ENCODE measurements at regions of chr22 and their contacts with region 1.

Region 1: GRCh38 chr22:21652010-21652546 is 10.0 kb downstream of the SDF2L1 start:
- DNase-seq: peak; percentile 86
- ATAC-seq: peak; percentile 98
- H3K4me3 ChIP-seq: peak overlapping the region; percentile 48 to 67 (median 58)
- H3K4me3 Mint-ChIP-seq: peak overlapping the region; percentile 91
- H3K27ac ChIP-seq: no peak overlapping the region
- H3K27ac Mint-ChIP-seq: peak overlapping the region; percentile 63
- H3K4me1 ChIP-seq: peaks cover 14 to 27% of the 10 kb centered on the region in 2 donors
- H3K4me1 Mint-ChIP-seq: peaks cover 26% of the 10 kb centered on the region
- H3K27me3 ChIP-seq: no peaks in the 10 kb centered on the region
- H3K27me3 Mint-ChIP-seq: no peaks in the 10 kb centered on the region
- CTCF ChIP-seq: no peak

Region 2: GRCh38 chr22:21666786-21667185 is 14.7 kb after region 1 on chr22:
- CTCF ChIA-PET with region 1: interaction called, 6 read pairs
- POLR2A ChIA-PET with region 1: no interaction called
- intact Hi-C with region 1: loop called (anchors 1 kb)
- DNase-seq: no peak
- ATAC-seq: no peak
- H3K4me3 ChIP-seq: peak overlapping the region in 4 of 5 experiments; percentile 77 to 96 (median 90)
- H3K4me3 Mint-ChIP-seq: peak overlapping the region; percentile 96
- H3K27ac ChIP-seq: peak overlapping the region in 1 of 2 donors; percentile 92
- H3K27ac Mint-ChIP-seq: peak overlapping the region; percentile 69
- H3K4me1 ChIP-seq: peaks cover 8 to 17% of the 10 kb centered on the region in 2 donors
- H3K4me1 Mint-ChIP-seq: peaks cover 28% of the 10 kb centered on the region
- H3K27me3 ChIP-seq: no peaks in the 10 kb centered on the region
- H3K27me3 Mint-ChIP-seq: no peaks in the 10 kb centered on the region
- CTCF ChIP-seq: no peak

Measured in B cell (primary cell).